ENCODE measurements at regions of chr1 and their contacts with region 1.

Region 1: DNA sequence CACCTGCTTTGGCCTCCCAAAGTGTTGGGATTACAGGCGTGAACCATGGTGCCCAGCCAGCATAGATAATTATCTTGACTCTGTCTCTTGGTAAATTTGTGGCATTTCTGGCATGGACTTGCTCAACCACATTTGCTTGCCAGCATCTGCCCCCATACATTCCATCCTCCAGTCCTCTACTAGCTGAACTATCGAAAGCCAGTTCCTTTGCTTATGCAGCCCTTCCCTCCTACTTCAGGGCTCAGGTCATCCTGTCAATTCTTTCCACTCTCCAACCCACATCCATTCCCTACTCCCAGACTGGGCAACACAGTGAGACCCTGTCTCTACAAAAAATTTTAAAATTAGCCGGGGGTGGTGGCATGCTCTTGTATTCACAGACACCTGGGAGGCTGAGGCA is 13.0 kb upstream of the UQCRHL start:
- DNase-seq: no peak
- H3K4me3 ChIP-seq: no peak overlapping the region
- CTCF ChIP-seq: no peak

Region 2: DNA sequence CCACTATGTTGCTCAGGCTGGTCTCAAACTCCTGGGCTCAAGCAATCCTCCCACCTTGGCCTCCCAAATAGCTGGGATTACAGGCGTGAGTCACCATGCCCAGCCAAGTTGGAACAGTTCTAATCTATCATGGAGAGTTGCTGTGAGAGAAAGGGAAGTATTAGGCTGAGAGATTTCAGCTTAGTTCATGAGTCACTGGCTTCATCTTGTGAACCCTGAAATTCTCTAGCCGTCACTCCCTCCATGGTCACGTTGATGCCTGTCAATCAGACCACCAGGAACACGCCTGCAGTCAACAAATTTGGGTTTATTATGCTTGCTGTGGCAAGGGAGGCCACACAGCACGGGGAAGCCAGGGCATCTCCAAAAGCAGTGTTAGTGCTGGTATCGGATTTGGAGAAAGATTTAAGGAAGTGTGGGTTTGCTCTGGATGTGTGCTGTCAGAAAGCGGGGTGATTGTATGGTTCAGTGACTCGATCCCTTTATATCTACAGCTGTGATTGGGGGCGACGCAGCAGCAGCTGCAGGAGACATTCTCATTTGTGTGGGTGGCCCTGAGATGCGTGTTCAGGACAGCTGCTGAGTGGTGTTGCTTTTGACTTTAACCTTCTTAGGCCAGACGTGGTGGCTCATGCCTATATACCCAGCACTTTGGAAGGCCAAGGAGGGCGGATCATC is 31.7 kb before region 1 on chr1:
- CTCF ChIA-PET with region 1: interaction called, 21 read pairs
- POLR2A ChIA-PET with region 1: no interaction called
- DNase-seq: no peak
- H3K4me3 ChIP-seq: no peak overlapping the region
- CTCF ChIP-seq: no peak

Region 3: GRCh38 chr1:15803354-15803753 is 17.1 kb before region 1 on chr1:
- CTCF ChIA-PET with region 1: interaction called, 80 read pairs
- POLR2A ChIA-PET with region 1: no interaction called
- DNase-seq: no peak
- H3K4me3 ChIP-seq: no peak overlapping the region
- CTCF ChIP-seq: peak; percentile 28

Region 4: GRCh38 chr1:15923241-15923640 is 102.8 kb after region 1 on chr1:
- CTCF ChIA-PET with region 1: interaction called, 25 read pairs
- POLR2A ChIA-PET with region 1: no interaction called
- DNase-seq: no peak
- H3K4me3 ChIP-seq: no peak overlapping the region
- CTCF ChIP-seq: no peak

Region 5: GRCh38 chr1:15957228-15958095 is 137.0 kb after region 1 on chr1:
- CTCF ChIA-PET with region 1: interaction called, 16 read pairs
- POLR2A ChIA-PET with region 1: no interaction called
- DNase-seq: no peak
- H3K4me3 ChIP-seq: no peak overlapping the region
- CTCF ChIP-seq: peak; percentile 51

Region 6: GRCh38 chr1:15985611-15986297 is 165.3 kb after region 1 on chr1:
- CTCF ChIA-PET with region 1: interaction called, 12 read pairs
- POLR2A ChIA-PET with region 1: no interaction called
- DNase-seq: no peak
- H3K4me3 ChIP-seq: no peak overlapping the region
- CTCF ChIP-seq: no peak

Region 7: DNA sequence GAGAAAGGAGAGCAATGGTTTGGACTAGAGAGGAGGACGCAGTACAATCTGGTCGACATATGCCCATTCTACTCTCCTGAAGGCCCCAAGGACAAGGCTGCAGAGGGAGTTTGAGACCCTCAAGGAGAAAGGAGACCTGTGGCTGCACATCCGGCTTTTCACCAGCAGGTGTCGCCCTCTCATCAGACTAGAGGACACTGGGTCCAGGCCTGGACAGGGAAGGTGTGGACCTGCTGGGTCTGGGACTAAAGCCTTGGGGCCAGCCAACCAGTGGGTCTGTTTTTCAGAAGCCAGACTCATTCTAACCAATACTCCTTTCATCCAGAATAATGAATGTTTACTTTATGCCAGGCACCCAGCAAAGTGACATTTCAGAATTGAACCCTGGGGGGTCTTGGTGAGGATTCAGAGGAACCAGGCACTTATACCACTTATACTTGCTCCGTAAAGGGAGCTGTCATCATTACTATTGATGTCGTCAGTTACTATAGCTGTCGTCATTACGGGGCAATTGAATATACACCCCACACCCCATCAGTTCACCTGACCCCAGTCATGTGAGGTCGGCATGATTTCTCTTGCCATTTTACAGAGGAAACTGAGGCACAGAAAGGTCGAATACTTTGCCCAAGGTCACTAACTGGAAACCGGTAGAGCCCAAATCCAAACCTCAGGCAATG is 188.7 kb after region 1 on chr1:
- CTCF ChIA-PET with region 1: interaction called, 22 read pairs
- POLR2A ChIA-PET with region 1: no interaction called
- DNase-seq: no peak
- H3K4me3 ChIP-seq: no peak overlapping the region
- CTCF ChIP-seq: peak; percentile 92

Region 8: GRCh38 chr1:16613185-16614147 is 793.0 kb after region 1 on chr1 and contains the start of gene NBPF1:
- CTCF ChIA-PET with region 1: no interaction called
- POLR2A ChIA-PET with region 1: no interaction called
- DNase-seq: peak; percentile 53
- H3K4me3 ChIP-seq: peak within 1 kb of the TSS; percentile 84
- CTCF ChIP-seq: no peak

Measured in AG04449 (cell line).